MCF 10A (cell line): ENCODE measurements at regions of chrX and their contacts with region 1.

Region 1: GRCh38 chrX:107672955-107673378 is 44.7 kb downstream of the PRPS1 start:
- DNase-seq: peak; percentile 88
- H3K4me3 Mint-ChIP-seq: peak overlapping the region; percentile 45
- H3K27ac Mint-ChIP-seq: peak overlapping the region; percentile 90
- H3K4me1 Mint-ChIP-seq: peaks cover 24% of the 10 kb centered on the region
- H3K27me3 Mint-ChIP-seq: peaks cover 67% of the 10 kb centered on the region
- CTCF ChIP-seq: peak; percentile 45

Region 2: GRCh38 chrX:107654872-107655761 is 17.9 kb before region 1 on chrX:
- CTCF ChIA-PET with region 1: interaction called, 74 read pairs
- POLR2A ChIA-PET with region 1: interaction called, 47 read pairs
- intact Hi-C with region 1: loop called (anchors 2 kb)
- DNase-seq: peak; percentile 84
- H3K4me3 Mint-ChIP-seq: peak overlapping the region; percentile 45
- H3K27ac Mint-ChIP-seq: peak overlapping the region; percentile 89
- H3K4me1 Mint-ChIP-seq: peaks cover 15% of the 10 kb centered on the region
- H3K27me3 Mint-ChIP-seq: peaks cover 44% of the 10 kb centered on the region
- CTCF ChIP-seq: peak; percentile 66

Region 3: DNA sequence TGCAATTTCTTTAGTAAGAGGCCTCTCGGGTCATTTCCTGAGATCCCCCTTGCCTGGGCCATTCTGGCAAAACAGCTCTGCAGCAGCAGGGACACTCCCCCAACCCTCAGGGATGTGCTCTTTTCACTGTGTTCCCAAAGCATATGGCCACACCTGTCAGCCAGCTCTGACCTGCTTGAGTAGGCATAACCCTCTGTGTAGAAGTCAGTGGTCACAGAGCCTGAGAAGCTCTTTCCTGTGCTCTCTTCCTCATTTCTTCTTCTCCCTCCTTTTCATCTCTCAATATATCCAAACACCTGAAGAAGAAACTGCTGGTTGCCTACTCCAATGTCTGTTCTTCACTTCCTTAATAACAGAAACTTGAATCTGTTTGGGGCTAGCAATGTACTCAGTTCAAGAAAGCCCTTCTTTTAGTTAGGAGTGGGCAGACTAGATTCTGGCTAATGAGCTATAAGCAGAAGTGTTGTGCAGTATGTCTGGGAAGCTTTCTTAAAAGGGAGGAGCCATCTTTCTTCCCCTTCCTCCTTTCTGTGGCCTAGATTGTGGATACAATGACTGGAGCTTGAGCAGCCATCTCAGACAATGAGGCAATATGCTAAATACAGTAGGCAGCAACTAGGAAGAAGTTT is 28.6 kb after region 1 on chrX:
- CTCF ChIA-PET with region 1: interaction called, 5 read pairs
- POLR2A ChIA-PET with region 1: interaction called, 679 read pairs
- intact Hi-C with region 1: no loop called
- DNase-seq: no peak
- H3K4me3 Mint-ChIP-seq: no peak overlapping the region
- H3K27ac Mint-ChIP-seq: no peak overlapping the region
- H3K4me1 Mint-ChIP-seq: peaks cover 16% of the 10 kb centered on the region
- H3K27me3 Mint-ChIP-seq: peaks cover 56% of the 10 kb centered on the region
- CTCF ChIP-seq: no peak

Region 4: DNA sequence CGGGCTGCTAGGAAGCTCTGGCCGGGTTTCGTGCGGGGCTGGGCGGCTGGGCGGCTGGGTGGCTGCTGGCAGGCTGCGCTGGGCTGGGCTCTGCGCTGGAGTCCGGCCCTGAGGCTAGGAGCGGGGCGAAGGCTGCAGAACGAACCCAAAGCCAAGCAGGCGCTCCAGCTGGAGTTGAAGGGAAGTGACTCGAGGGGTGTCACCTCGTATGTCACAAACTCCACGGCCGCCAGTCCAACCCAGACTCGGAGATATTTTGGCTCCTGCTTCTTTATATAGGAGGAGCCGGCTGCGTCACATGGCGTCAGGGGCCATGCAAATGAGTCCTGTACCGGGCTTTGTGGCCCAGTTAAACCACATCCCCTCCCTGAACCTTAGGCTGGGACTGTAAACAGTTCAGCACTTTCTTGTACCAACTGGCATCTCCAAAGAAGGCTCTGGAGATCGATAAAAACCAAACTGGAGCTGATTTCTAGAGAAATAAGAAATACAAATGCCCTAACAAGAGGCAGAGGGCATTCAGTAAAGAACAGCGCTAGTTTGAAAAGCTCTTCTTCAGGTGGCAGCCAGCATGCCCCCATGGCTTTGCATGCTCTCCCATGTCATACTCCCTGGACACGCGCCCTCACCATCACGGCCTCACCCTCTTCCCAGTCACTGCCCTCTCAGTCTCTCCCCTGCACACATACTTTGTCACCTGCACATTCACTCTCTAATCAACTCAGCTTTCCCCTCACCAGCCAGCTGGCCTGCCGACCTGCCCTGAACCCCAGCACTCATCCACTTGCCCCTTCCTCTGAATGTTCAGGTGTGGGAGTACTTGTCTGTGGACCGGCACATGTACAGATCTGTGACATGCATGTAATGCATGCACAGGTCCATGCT is 44.1 kb after region 1 on chrX:
- CTCF ChIA-PET with region 1: interaction called, 157 read pairs
- POLR2A ChIA-PET with region 1: interaction called, 679 read pairs
- intact Hi-C with region 1: loop called (anchors 1 kb)
- DNase-seq: peak; percentile 84
- H3K4me3 Mint-ChIP-seq: peak overlapping the region; percentile 74
- H3K27ac Mint-ChIP-seq: peak overlapping the region; percentile 60
- H3K4me1 Mint-ChIP-seq: peaks cover 21% of the 10 kb centered on the region
- H3K27me3 Mint-ChIP-seq: peaks cover 42% of the 10 kb centered on the region
- CTCF ChIP-seq: no peak

Region 5: GRCh38 chrX:107741404-107741790 is 68.4 kb after region 1 on chrX:
- CTCF ChIA-PET with region 1: interaction called, 9 read pairs
- POLR2A ChIA-PET with region 1: interaction called, 83 read pairs
- intact Hi-C with region 1: loop called (anchors 2 kb)
- DNase-seq: no peak
- H3K4me3 Mint-ChIP-seq: no peak overlapping the region
- H3K27ac Mint-ChIP-seq: peak overlapping the region; percentile 93
- H3K4me1 Mint-ChIP-seq: peaks cover 37% of the 10 kb centered on the region
- H3K27me3 Mint-ChIP-seq: peaks cover 54% of the 10 kb centered on the region
- CTCF ChIP-seq: no peak

Region 6: GRCh38 chrX:107894038-107894437 is 221.1 kb after region 1 on chrX:
- CTCF ChIA-PET with region 1: interaction called, 7 read pairs
- POLR2A ChIA-PET with region 1: interaction called, 3 read pairs
- intact Hi-C with region 1: loop called (anchors 5 kb)
- DNase-seq: peak; percentile 71
- H3K4me3 Mint-ChIP-seq: no peak overlapping the region
- H3K27ac Mint-ChIP-seq: no peak overlapping the region
- H3K4me1 Mint-ChIP-seq: no peaks in the 10 kb centered on the region
- H3K27me3 Mint-ChIP-seq: peaks cover 59% of the 10 kb centered on the region
- CTCF ChIP-seq: peak; percentile 46

Region 7: GRCh38 chrX:108070891-108071290 is 397.9 kb after region 1 on chrX:
- CTCF ChIA-PET with region 1: interaction called, 3 read pairs
- POLR2A ChIA-PET with region 1: interaction called, 3 read pairs
- intact Hi-C with region 1: loop called (anchors 5 kb)
- DNase-seq: peak; percentile 77
- H3K4me3 Mint-ChIP-seq: no peak overlapping the region
- H3K27ac Mint-ChIP-seq: no peak overlapping the region
- H3K4me1 Mint-ChIP-seq: peaks cover 15% of the 10 kb centered on the region
- H3K27me3 Mint-ChIP-seq: peaks cover 71% of the 10 kb centered on the region
- CTCF ChIP-seq: no peak

Region 8: GRCh38 chrX:108211301-108211700 is 538.3 kb after region 1 on chrX:
- CTCF ChIA-PET with region 1: no interaction called
- POLR2A ChIA-PET with region 1: no interaction called
- intact Hi-C with region 1: no loop called
- DNase-seq: no peak
- H3K4me3 Mint-ChIP-seq: no peak overlapping the region
- H3K27ac Mint-ChIP-seq: no peak overlapping the region
- H3K4me1 Mint-ChIP-seq: no peaks in the 10 kb centered on the region
- H3K27me3 Mint-ChIP-seq: peaks cover 72% of the 10 kb centered on the region
- CTCF ChIP-seq: no peak

Region 9: DNA sequence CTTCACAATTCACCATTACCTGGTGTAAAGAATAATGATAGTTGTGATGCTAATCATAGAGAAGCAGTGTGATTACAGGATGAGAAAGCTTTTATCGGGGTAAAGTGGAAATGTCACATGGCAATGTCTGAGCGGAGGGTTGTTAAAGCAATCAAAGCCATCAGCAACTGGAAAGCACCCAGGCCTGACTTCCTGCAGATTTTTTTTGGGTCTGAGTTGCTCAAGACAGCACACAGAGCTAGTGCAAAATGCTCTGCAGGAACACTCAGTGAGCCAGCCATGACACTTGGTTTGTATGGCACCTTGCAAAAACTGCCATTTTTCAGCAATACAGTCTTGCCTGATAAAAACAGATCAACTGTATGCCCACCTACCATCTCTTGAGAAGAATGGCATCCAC is 612.4 kb after region 1 on chrX:
- CTCF ChIA-PET with region 1: no interaction called
- POLR2A ChIA-PET with region 1: no interaction called
- intact Hi-C with region 1: no loop called
- DNase-seq: no peak
- H3K4me3 Mint-ChIP-seq: no peak overlapping the region
- H3K27ac Mint-ChIP-seq: no peak overlapping the region
- H3K4me1 Mint-ChIP-seq: no peaks in the 10 kb centered on the region
- H3K27me3 Mint-ChIP-seq: peaks cover 67% of the 10 kb centered on the region
- CTCF ChIP-seq: no peak